ENCODE measurements at regions of chr9 and their contacts with region 1.

Region 1: GRCh38 chr9:76451234-76451633 is 7.7 kb upstream of the GCNT1 start:
- DNase-seq: no peak
- H3K4me3 ChIP-seq: no peak overlapping the region
- H3K4me3 Mint-ChIP-seq: no peak overlapping the region
- H3K27ac ChIP-seq: no peak overlapping the region
- H3K27ac Mint-ChIP-seq: no peak overlapping the region
- H3K4me1 ChIP-seq: peaks cover 10% of the 10 kb centered on the region
- H3K4me1 Mint-ChIP-seq: peaks cover 4 to 12% (median 7%) of the 10 kb centered on the region in 4 donors
- H3K27me3 ChIP-seq: no peaks in the 10 kb centered on the region
- H3K27me3 Mint-ChIP-seq: no peaks in the 10 kb centered on the region

Region 2: GRCh38 chr9:76486151-76486550 is 34.9 kb after region 1 on chr9:
- CTCF ChIA-PET with region 1: no interaction called
- POLR2A ChIA-PET with region 1: no interaction called
- intact Hi-C with region 1: no loop called
- DNase-seq: no peak
- H3K4me3 ChIP-seq: no peak overlapping the region
- H3K4me3 Mint-ChIP-seq: no peak overlapping the region
- H3K27ac ChIP-seq: no peak overlapping the region
- H3K27ac Mint-ChIP-seq: no peak overlapping the region
- H3K4me1 ChIP-seq: peaks cover 10% of the 10 kb centered on the region
- H3K4me1 Mint-ChIP-seq: peaks cover 13 to 27% (median 17%) of the 10 kb centered on the region in 4 donors
- H3K27me3 ChIP-seq: no peaks in the 10 kb centered on the region
- H3K27me3 Mint-ChIP-seq: no peaks in the 10 kb centered on the region

Region 3: GRCh38 chr9:76651119-76651705 is 200.0 kb after region 1 on chr9:
- CTCF ChIA-PET with region 1: interaction called, 89 read pairs
- POLR2A ChIA-PET with region 1: interaction called, 3 read pairs
- intact Hi-C with region 1: no loop called
- DNase-seq: peak in 2 of 5 donors; percentile 10 to 22
- H3K4me3 ChIP-seq: peak overlapping the region; percentile 14 to 23
- H3K4me3 Mint-ChIP-seq: peak overlapping the region; percentile 69 to 90 (median 78)
- H3K27ac ChIP-seq: no peak overlapping the region
- H3K27ac Mint-ChIP-seq: peak overlapping the region; percentile 5 to 89 (median 75)
- H3K4me1 ChIP-seq: peaks cover 25% of the 10 kb centered on the region
- H3K4me1 Mint-ChIP-seq: peaks cover 21 to 39% (median 31%) of the 10 kb centered on the region in 4 donors
- H3K27me3 ChIP-seq: no peaks in the 10 kb centered on the region
- H3K27me3 Mint-ChIP-seq: no peaks in the 10 kb centered on the region

Region 4: DNA sequence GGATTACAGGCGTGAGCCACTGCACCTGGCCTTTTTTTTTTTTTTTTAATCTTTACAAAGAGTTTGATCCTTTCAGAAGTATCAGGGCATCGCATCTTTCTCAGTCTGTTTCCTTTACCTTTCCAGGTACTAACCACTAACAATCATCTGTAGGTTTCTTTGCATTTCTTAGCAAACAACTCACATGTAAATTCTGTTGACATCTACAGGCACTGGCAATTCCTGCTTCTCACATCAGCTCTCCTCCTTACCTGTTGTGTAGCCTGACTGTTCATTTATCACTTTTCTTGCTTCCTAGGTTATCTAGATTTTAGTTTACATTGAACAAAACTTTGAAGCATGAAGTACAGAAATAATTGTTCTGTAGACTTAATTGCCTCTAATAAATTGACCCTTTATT is 698.6 kb after region 1 on chr9:
- CTCF ChIA-PET with region 1: no interaction called
- POLR2A ChIA-PET with region 1: no interaction called
- intact Hi-C with region 1: loop called (anchors 1 kb)
- DNase-seq: no peak
- H3K4me3 ChIP-seq: no peak overlapping the region
- H3K4me3 Mint-ChIP-seq: no peak overlapping the region
- H3K27ac ChIP-seq: no peak overlapping the region
- H3K27ac Mint-ChIP-seq: no peak overlapping the region
- H3K4me1 ChIP-seq: no peaks in the 10 kb centered on the region
- H3K4me1 Mint-ChIP-seq: no peaks in the 10 kb centered on the region
- H3K27me3 ChIP-seq: no peaks in the 10 kb centered on the region
- H3K27me3 Mint-ChIP-seq: peaks cover 3 to 10% of the 10 kb centered on the region in 2 donors